ENCODE measurements at regions of chr5 and their contacts with region 1.

Region 1: DNA sequence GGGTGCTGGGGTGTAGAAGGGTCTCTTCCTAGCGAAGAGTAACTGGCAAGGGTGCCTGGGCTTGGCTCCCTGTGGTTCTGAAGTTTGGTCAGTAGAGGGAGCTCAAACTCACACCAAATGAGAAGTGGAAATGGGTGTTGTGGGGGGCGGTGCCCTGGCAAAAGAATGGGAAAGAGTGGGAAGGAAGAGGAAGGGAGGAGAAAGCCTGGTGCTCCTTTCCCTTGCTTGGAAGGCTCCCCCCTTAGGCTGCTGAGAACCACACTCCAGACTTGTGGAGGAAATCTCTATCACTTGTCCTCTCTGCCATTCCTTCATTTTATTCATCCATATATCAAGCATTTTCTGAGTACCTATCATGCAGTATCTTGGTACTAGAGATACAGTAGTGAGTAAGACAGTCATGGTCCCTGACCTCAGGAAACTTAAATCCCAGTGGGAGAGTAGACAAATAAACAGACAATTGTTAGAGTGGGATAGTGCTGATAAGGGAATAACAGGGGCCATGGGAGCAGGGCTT is 13.0 kb downstream of the SLC4A9 start:
- DNase-seq: peak; percentile 73
- H3K4me3 ChIP-seq: no peak overlapping the region
- H3K27ac ChIP-seq: peak overlapping the region; percentile 30
- H3K4me1 ChIP-seq: peaks cover 9% of the 10 kb centered on the region
- H3K27me3 ChIP-seq: no peaks in the 10 kb centered on the region
- CTCF ChIP-seq: peak; percentile 93

Region 2: DNA sequence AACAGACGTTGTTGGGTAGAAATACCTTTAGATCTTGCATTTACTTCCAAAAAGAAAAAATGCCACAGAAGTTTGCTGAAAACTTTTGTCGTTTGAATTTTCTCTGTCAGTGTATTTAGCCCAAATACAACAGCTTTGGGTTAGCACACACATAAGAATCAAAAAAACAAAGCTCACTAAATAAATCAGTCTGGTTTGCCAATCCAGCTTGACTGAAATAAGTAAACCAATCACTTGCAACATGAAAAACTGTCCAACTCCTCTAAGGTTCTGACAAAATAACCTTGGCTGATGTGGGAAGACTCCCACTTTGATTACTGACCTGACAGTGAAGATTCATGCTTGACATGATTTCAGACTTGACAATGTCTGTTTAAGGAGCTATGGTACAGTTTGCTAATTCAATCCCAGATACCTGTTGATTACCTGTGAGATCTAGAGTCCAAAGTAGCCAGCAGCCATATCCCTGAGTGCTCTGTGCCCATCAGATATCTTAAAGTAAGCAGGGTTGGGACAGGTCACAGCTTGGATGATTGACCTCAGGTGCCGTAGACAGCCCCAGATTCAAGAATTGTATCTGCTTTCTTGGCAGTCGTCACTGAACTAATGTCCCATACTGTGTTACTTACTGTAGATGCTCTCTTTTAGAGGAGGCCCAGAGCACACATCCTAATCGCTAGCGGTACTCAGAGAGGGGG is 246.6 kb before region 1 on chr5:
- intact Hi-C with region 1: no loop called
- DNase-seq: no peak
- H3K4me3 ChIP-seq: no peak overlapping the region
- H3K27ac ChIP-seq: no peak overlapping the region
- H3K4me1 ChIP-seq: peaks cover 36% of the 10 kb centered on the region
- H3K27me3 ChIP-seq: no peaks in the 10 kb centered on the region
- CTCF ChIP-seq: no peak

Region 3: GRCh38 chr5:140312067-140312790 is 60.8 kb before region 1 on chr5:
- intact Hi-C with region 1: no loop called
- DNase-seq: no peak
- H3K4me3 ChIP-seq: peak overlapping the region; percentile 29
- H3K27ac ChIP-seq: peak overlapping the region; percentile 87
- H3K4me1 ChIP-seq: peaks cover 41% of the 10 kb centered on the region
- H3K27me3 ChIP-seq: no peaks in the 10 kb centered on the region
- CTCF ChIP-seq: no peak

Region 4: GRCh38 chr5:140725799-140726471 is 352.9 kb after region 1 on chr5:
- intact Hi-C with region 1: loop called (anchors 10 kb)
- DNase-seq: no peak
- H3K4me3 ChIP-seq: peak overlapping the region; percentile 35
- H3K27ac ChIP-seq: no peak overlapping the region
- H3K4me1 ChIP-seq: no peaks in the 10 kb centered on the region
- H3K27me3 ChIP-seq: peaks cover 46% of the 10 kb centered on the region
- CTCF ChIP-seq: no peak